Left lung (tissue), 14 donors: ENCODE measurements at regions of chr17 and their contacts with region 1.

Region 1: GRCh38 chr17:44919885-44920564 is 4.7 kb upstream of the GFAP start:
- DNase-seq: peak; percentile 66 to 86 (median 82)
- ATAC-seq: peak; percentile 95
- H3K4me3 ChIP-seq: no peak overlapping the region
- H3K27ac ChIP-seq: no peak overlapping the region
- H3K4me1 ChIP-seq: peaks cover 3 to 19% of the 10 kb centered on the region in 2 donors
- H3K27me3 ChIP-seq: peaks cover 0 to 39% of the 10 kb centered on the region in 2 donors
- CTCF ChIP-seq: peak; percentile 71 to 89

Region 2: DNA sequence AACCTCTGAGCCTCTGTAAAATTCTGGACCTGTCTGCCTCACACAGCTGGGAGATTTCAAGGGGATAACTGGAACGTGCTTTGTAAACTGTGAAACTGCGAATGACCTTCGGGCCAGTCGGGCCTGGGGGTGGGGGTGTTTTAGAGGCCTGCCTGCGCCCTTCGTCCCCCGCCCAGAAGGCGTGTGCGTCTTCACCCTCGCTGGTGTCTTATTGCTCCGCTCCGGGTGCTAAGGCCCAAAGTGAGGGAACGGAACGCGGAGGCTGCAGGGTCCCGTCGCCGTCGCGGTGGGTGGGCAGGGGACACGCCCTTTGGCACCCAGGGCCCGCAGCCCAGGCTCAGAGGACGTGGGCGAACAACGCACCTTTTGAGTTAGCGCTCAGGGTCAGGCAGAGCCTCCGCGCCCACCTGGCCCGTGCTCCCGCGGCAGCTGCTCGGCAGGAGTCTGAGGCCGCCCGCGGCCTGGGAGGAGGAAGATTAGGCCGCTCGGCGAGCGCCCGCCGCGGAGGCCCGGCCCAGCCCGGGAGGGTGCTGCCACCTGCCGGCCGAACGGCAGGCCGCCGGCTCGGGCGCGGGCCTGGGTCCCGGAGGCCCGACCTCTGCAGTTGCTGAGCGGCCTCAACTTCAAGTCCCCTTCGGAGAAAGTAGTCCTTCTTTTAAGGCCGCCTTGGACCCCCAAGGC is 101.7 kb after region 1 on chr17:
- intact Hi-C with region 1: loop called (anchors 5 to 10 kb)
- DNase-seq: peak; percentile 60 to 96 (median 68)
- ATAC-seq: peak; percentile 91
- H3K4me3 ChIP-seq: peak overlapping the region; percentile 17 to 27
- H3K27ac ChIP-seq: peak overlapping the region in 1 of 2 donors; percentile 67
- H3K4me1 ChIP-seq: peaks cover 14 to 32% of the 10 kb centered on the region in 2 donors
- H3K27me3 ChIP-seq: peaks cover 0 to 52% of the 10 kb centered on the region in 2 donors
- CTCF ChIP-seq: peak; percentile 96

Region 3: GRCh38 chr17:45123930-45124796 is 204.1 kb after region 1 on chr17:
- intact Hi-C with region 1: loop called in 1 of 2 experiments (anchors 10 kb)
- DNase-seq: peak in 2 of 4 donors; percentile 62 to 86
- ATAC-seq: peak; percentile 75
- H3K4me3 ChIP-seq: no peak overlapping the region
- H3K27ac ChIP-seq: peak overlapping the region in 1 of 2 donors; percentile 76
- H3K4me1 ChIP-seq: peaks cover 24 to 60% of the 10 kb centered on the region in 2 donors
- H3K27me3 ChIP-seq: peaks cover 0 to 13% of the 10 kb centered on the region in 2 donors
- CTCF ChIP-seq: no peak